Ovary (tissue), 10 donors: ENCODE measurements at regions of chr20 and their contacts with region 1.

Region 1: DNA sequence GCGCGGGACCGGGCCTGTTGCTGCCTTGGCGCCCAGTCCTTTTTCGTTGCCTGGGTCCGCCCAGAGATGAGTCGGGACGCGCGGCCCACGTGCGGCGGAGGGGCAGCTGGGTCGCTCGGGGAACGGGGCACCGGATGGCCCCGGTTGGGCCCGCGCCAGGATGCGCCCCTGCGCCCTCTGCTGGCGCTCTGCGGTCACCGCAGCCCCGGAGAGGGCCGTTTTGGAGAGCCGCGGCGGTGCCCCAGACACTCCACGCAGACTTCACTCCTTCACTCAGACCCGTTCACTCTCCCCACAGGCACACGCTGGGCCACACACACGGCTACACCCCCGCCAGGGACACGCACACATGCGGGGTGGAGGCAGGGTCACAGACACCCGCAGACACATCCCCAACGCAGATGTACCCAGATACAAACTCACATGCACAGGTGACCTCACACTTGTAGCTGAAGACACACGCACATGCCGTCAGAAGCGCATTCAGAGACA is 38.8 kb downstream of the SRC start:
- DNase-seq: peak; percentile 69 to 88 (median 73)
- H3K4me3 ChIP-seq: peak overlapping the region; percentile 37
- H3K27ac ChIP-seq: peak overlapping the region in 1 of 2 donors; percentile 43
- H3K4me1 ChIP-seq: peaks cover 10% of the 10 kb centered on the region
- H3K27me3 ChIP-seq: no peaks in the 10 kb centered on the region
- CTCF ChIP-seq: peak; percentile 76 to 95 (median 94)
- EP300 ChIP-seq: no peak
- POLR2A ChIP-seq: peak; percentile 11

Region 2: GRCh38 chr20:37202267-37202943 is 182.3 kb before region 1 on chr20:
- intact Hi-C with region 1: loop called in 3 of 4 experiments (anchors 5 to 10 kb)
- DNase-seq: peak in 3 of 5 donors; percentile 19 to 59 (median 43)
- H3K4me3 ChIP-seq: no peak overlapping the region
- H3K27ac ChIP-seq: peak overlapping the region in 1 of 2 donors; percentile 32
- H3K4me1 ChIP-seq: peaks cover 4% of the 10 kb centered on the region
- H3K27me3 ChIP-seq: no peaks in the 10 kb centered on the region
- CTCF ChIP-seq: peak; percentile 56 to 81 (median 61)
- EP300 ChIP-seq: no peak
- POLR2A ChIP-seq: no peak

Region 3: DNA sequence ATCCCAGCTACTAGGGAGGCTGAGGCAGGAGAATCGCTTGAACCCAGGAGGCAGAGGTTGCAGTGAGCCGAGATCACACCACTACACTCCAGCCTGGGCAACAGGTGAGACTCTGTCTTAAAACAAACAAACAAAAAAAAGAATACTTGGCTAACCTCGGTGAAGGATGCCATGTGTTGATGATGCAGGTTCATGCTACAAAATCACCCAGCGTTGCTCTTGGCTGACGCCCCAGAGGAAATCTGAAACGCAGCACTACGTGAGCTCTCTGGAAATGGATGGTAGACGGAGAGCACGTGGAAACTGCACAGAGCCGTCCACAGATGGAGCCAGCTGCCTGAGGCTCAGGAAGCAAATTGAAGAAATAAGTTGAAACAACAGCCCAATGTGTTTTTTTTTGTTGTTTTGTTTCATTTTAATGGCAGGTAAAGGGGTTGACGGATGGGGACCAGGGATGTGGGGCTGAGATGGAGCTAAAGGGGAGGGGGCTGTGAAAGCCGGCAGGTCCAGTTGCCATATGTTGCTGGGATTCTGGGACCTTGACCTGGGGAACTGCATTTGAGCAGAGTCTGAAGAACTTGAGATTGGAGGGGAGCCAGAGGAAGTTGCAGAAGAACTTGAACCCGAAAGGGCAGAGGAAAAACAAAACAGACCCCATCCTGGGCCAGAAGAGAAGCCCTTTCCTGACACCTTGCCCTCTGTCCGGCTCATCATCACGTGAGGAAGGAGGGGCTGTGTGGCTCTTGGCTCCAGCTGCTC is 108.1 kb before region 1 on chr20:
- intact Hi-C with region 1: loop called in 3 of 4 experiments (anchors 2 to 5 kb)
- DNase-seq: peak; percentile 84 to 87 (median 86)
- H3K4me3 ChIP-seq: no peak overlapping the region
- H3K27ac ChIP-seq: peak overlapping the region; percentile 79 to 85
- H3K4me1 ChIP-seq: peaks cover 5% of the 10 kb centered on the region
- H3K27me3 ChIP-seq: no peaks in the 10 kb centered on the region
- CTCF ChIP-seq: peak in 2 of 3 donors; percentile 17 to 41
- EP300 ChIP-seq: no peak
- POLR2A ChIP-seq: peak; percentile 20

Region 4: DNA sequence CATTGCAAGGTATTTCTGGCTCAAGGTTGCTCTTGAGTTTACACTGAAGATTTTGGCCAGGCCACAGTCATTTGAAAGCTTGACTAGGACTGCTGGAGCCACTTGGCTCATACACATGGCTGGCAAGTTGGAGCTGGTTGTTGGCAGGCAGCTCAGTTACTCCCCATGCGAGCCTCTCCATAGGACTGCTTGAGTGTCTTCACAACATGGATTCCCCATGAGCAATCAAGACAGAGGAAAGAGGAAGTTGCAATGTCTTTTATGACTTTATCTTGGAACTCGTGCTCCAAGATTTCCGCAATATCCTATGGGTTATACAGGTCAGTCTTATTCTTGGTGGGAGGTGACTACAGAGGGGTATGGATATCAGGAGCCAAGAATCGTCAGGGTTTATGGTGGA is 96.6 kb before region 1 on chr20:
- intact Hi-C with region 1: loop called in 3 of 4 experiments (anchors 5 kb)
- DNase-seq: peak in 1 of 5 donors; percentile 7
- H3K4me3 ChIP-seq: no peak overlapping the region
- H3K27ac ChIP-seq: no peak overlapping the region
- H3K4me1 ChIP-seq: peaks cover 2% of the 10 kb centered on the region
- H3K27me3 ChIP-seq: no peaks in the 10 kb centered on the region
- CTCF ChIP-seq: no peak
- EP300 ChIP-seq: no peak
- POLR2A ChIP-seq: no peak

Region 5: GRCh38 chr20:37941332-37941731 is 556.6 kb after region 1 on chr20:
- intact Hi-C with region 1: no loop called
- DNase-seq: no peak
- H3K4me3 ChIP-seq: no peak overlapping the region
- H3K27ac ChIP-seq: no peak overlapping the region
- H3K4me1 ChIP-seq: no peaks in the 10 kb centered on the region
- H3K27me3 ChIP-seq: no peaks in the 10 kb centered on the region
- CTCF ChIP-seq: no peak
- EP300 ChIP-seq: no peak
- POLR2A ChIP-seq: no peak